ENCODE measurements at regions of chr15 and their contacts with region 1.

Region 1: GRCh38 chr15:95687686-95688085 is 642.8 kb upstream of the NR2F2 start:
- DNase-seq: no peak
- ATAC-seq: no peak
- H3K4me3 ChIP-seq: no peak overlapping the region
- H3K27ac ChIP-seq: no peak overlapping the region
- H3K4me1 ChIP-seq: peaks cover 0 to 7% (median 0%) of the 10 kb centered on the region in 12 donors
- H3K27me3 ChIP-seq: no peaks in the 10 kb centered on the region
- CTCF ChIP-seq: no peak
- POLR2A ChIP-seq: no peak

Region 2: DNA sequence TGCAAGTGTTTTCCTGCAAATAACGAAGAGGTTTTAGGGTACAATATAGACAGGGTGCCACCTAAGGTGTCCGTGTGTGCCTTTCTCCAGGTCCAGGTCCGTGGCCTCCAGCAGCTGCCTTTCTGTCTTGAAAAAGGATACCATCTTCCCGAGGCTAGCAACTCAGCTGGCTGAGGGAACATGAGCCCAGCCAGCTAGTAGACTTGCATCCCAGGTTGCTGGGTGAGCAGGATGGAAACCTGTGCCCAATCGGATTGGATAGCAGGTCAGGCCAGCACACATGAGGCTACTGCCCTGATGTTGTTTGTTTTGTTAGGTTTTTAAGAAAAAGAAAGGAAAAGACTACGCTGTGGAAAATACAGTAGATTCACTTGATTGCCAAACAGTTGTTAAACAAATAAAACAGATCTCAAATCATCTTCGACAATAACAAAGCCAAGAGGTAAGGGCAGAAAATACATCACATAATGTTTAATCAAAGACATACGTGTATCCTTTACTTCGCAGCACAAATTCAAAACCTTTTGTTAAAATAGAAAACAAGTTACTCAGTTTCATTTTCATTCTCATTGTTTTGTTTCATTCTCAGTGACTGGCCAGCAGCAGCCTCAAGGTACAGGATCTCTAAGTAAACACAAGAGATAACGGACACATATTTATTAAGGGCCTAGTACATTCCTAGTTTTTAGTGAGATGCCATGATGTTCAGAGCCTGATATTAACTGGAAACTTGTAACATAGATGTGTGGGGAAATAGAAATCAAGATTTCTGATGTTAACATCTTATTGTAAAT is 18.3 kb before region 1 on chr15:
- intact Hi-C with region 1: loop called in 1 of 10 experiments (anchors 2 kb)
- DNase-seq: peak in 1 of 5 donors; percentile 8
- ATAC-seq: peak in 1 of 4 donors; percentile 39
- H3K4me3 ChIP-seq: peak overlapping the region in 8 of 12 donors; percentile 13 to 45 (median 30)
- H3K27ac ChIP-seq: peak overlapping the region in 11 of 12 donors; percentile 9 to 79 (median 52)
- H3K4me1 ChIP-seq: peaks cover 0 to 7% (median 0%) of the 10 kb centered on the region in 12 donors
- H3K27me3 ChIP-seq: no peaks in the 10 kb centered on the region
- CTCF ChIP-seq: no peak
- POLR2A ChIP-seq: no peak